ENCODE measurements at regions of chr14 and their contacts with region 1.

Region 1: DNA sequence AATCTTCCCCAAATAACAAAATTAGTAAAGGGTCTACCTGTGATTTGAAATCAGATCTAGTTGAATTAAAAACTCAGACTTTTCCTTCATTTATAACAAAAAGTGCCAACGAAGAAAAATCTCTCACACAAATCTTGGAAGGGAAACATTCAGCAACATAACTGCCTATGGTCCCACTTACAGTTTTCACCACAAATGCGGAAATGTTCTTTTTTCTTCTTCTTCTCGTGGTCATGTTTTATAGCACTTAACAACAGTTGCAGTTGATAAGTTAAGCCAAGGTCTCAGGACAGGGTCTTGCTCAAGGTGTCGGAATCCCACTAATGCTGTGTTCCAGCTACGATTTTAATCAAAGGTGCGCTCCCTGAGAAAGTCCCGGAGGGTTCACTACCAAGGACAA is 10.1 kb downstream of the RNASE6 start:
- DNase-seq: no peak
- ATAC-seq: no peak
- H3K4me3 ChIP-seq: no peak overlapping the region
- H3K27ac ChIP-seq: peak overlapping the region in 3 of 10 donors; percentile 2 to 70 (median 28)
- H3K4me1 ChIP-seq: peaks cover 0 to 43% (median 11%) of the 10 kb centered on the region in 9 donors
- H3K27me3 ChIP-seq: no peaks in the 10 kb centered on the region
- CTCF ChIP-seq: no peak

Region 2: DNA sequence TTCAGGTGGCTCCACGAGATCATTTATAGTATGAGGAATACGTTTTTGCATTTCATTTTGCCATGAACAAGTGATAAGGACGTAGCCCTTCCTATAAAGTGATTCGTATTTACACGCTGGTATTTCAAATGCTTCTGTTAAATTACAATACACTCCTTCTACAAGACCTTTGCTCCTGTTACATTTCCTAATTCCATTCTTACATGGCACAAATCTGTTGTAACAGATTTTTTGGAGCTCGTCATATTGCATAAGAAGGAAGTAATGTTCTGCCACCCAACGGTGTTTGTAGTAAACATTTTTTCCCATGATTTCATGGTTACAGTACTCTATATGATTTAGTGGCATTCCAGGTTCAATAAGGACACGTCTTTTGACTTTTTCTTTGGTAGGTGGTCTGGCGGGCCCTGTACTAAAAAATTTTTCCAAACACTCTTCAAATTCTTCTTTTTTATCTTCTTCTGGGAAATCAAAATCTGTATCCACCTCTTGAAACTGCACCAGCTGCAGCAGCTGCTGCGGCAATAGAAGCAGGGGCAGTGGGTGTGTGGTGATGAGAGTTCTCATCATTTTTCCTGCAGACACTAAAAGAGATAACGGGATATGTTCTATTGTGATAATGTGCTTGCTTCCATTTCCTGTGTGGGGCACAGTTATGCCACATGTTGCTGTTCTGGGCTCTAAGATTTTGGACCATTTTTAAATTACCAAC is 234.5 kb before region 1 on chr14:
- intact Hi-C with region 1: no loop called
- DNase-seq: no peak
- ATAC-seq: no peak
- H3K4me3 ChIP-seq: no peak overlapping the region
- H3K27ac ChIP-seq: no peak overlapping the region
- H3K4me1 ChIP-seq: no peaks in the 10 kb centered on the region
- H3K27me3 ChIP-seq: no peaks in the 10 kb centered on the region
- CTCF ChIP-seq: no peak

Region 3: GRCh38 chr14:20682435-20683124 is 108.6 kb before region 1 on chr14:
- intact Hi-C with region 1: no loop called
- DNase-seq: peak; percentile 88 to 93
- ATAC-seq: peak; percentile 89 to 95 (median 92)
- H3K4me3 ChIP-seq: peak overlapping the region; percentile 67 to 99 (median 89)
- H3K27ac ChIP-seq: peak overlapping the region; percentile 98 to 100 (median 100)
- H3K4me1 ChIP-seq: peaks cover 0 to 63% (median 16%) of the 10 kb centered on the region in 9 donors
- H3K27me3 ChIP-seq: no peaks in the 10 kb centered on the region
- CTCF ChIP-seq: peak in 4 of 9 donors; percentile 1 to 45 (median 21)

Region 4: GRCh38 chr14:20757965-20758364 is 33.2 kb before region 1 on chr14:
- intact Hi-C with region 1: no loop called
- DNase-seq: peak in 1 of 2 donors; percentile 34
- ATAC-seq: peak in 1 of 8 donors; percentile 61
- H3K4me3 ChIP-seq: no peak overlapping the region
- H3K27ac ChIP-seq: no peak overlapping the region
- H3K4me1 ChIP-seq: peaks cover 0 to 9% (median 0%) of the 10 kb centered on the region in 9 donors
- H3K27me3 ChIP-seq: no peaks in the 10 kb centered on the region
- CTCF ChIP-seq: peak in 7 of 9 donors; percentile 43 to 67 (median 48)

Region 5: GRCh38 chr14:20818861-20819260 is 27.7 kb after region 1 on chr14:
- intact Hi-C with region 1: loop called in 1 of 10 experiments (anchors 1 kb)
- DNase-seq: no peak
- ATAC-seq: no peak
- H3K4me3 ChIP-seq: no peak overlapping the region
- H3K27ac ChIP-seq: no peak overlapping the region
- H3K4me1 ChIP-seq: peaks cover 0 to 21% (median 0%) of the 10 kb centered on the region in 9 donors
- H3K27me3 ChIP-seq: no peaks in the 10 kb centered on the region
- CTCF ChIP-seq: peak in 3 of 9 donors; percentile 10 to 21 (median 13)